ENCODE measurements at regions of chr1 and their contacts with region 1.

Region 1: DNA sequence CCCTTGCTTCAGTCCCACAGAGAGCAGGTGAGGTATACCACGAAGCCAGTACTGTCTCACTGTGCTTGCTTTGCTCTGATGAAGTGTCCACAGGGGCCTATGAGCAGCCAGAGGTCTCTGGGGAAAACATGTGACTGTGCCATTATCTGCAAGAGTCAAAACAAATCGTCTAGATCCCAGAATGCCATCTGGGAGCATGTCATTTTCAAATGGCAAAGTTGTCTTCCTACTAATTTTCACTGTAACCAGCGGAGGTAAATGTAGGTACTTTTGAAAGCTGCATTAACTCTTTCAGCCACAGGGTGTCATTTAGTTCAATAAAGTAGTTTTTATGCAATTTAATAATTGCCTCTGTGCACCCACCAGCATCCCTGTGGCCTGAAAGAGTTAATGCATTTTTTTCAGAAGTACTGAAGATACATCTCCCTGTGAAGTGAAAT is 173.6 kb upstream of the SGIP1 start:
- DNase-seq: peak; percentile 44 to 56 (median 49)
- H3K4me3 ChIP-seq: no peak overlapping the region
- H3K27ac ChIP-seq: no peak overlapping the region
- H3K4me1 ChIP-seq: peaks cover 0 to 5% (median 3%) of the 10 kb centered on the region in 4 experiments
- H3K27me3 ChIP-seq: no peaks in the 10 kb centered on the region

Region 2: DNA sequence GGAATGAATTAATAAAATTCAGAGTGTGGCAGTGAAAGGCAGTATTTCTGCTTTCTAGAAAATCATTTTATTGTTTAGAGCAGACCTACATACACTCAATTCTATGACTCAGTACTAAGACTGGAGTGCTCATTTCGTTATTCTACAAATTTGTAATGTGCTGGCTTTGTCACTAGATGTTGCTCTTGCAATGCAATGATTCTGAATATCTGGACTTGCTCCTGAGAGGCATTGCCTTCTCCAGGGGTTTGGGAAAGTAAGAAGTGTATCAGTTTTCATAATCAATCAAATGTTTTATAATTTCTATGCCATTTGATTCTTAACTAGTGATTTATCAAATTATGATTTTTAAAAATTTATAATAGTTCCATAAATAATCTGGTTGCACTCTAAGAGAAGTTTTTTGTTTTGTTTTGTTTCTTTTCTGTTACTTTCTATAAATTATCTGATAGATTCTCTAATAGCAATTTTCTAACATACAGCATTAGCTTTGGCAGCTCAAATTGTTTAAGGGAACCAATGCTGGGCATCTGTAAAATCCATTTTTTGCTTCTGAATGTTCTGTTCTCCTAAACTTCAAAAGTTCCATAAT is 106.9 kb before region 1 on chr1:
- CTCF ChIA-PET with region 1: interaction called, 36 read pairs
- POLR2A ChIA-PET with region 1: no interaction called
- DNase-seq: peak; percentile 65 to 73 (median 69)
- H3K4me3 ChIP-seq: no peak overlapping the region
- H3K27ac ChIP-seq: no peak overlapping the region
- H3K4me1 ChIP-seq: peaks cover 0 to 26% (median 14%) of the 10 kb centered on the region in 4 experiments
- H3K27me3 ChIP-seq: no peaks in the 10 kb centered on the region

Region 3: DNA sequence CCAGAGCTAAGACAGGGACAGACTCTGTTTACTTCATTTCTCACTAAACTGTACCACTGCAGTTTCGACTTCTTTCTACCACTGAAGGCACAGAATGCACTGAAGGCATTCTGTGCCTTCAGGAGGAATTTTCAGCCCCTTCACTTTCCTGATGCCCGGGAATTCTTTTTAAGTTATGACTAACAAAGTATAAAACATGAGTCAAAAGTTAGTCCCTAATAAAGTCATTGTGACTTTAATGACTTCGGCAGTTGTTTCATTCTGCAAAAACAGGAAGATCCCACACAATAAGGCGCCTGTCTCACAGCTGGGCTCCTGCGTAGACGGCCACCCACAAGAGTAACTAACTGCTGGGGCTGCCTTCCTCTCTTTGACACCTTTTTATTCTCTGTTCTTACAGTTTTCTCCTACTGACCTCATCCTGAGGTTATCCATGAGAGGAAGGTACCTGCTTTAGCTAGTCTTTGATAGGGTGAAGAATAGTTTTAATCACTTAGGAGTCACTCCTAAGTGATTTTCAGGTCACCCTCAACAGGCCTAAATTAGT is 10.2 kb before region 1 on chr1:
- CTCF ChIA-PET with region 1: interaction called, 17 read pairs
- POLR2A ChIA-PET with region 1: interaction called, 4 read pairs
- DNase-seq: peak; percentile 60 to 93 (median 87)
- H3K4me3 ChIP-seq: peak overlapping the region in 3 of 7 experiments; percentile 2 to 51 (median 15)
- H3K27ac ChIP-seq: peak overlapping the region; percentile 37 to 80
- H3K4me1 ChIP-seq: peaks cover 43 to 54% (median 48%) of the 10 kb centered on the region in 4 experiments
- H3K27me3 ChIP-seq: no peaks in the 10 kb centered on the region

Region 4: GRCh38 chr1:66374561-66375111 is 14.3 kb after region 1 on chr1:
- CTCF ChIA-PET with region 1: interaction called, 15 read pairs
- POLR2A ChIA-PET with region 1: interaction called, 3 read pairs
- DNase-seq: peak in 2 of 3 donors; percentile 64 to 70
- H3K4me3 ChIP-seq: peak overlapping the region in 1 of 7 experiments; percentile 30
- H3K27ac ChIP-seq: peak overlapping the region in 1 of 2 experiments; percentile 47
- H3K4me1 ChIP-seq: peaks cover 37 to 55% (median 48%) of the 10 kb centered on the region in 4 experiments
- H3K27me3 ChIP-seq: no peaks in the 10 kb centered on the region

Region 5: DNA sequence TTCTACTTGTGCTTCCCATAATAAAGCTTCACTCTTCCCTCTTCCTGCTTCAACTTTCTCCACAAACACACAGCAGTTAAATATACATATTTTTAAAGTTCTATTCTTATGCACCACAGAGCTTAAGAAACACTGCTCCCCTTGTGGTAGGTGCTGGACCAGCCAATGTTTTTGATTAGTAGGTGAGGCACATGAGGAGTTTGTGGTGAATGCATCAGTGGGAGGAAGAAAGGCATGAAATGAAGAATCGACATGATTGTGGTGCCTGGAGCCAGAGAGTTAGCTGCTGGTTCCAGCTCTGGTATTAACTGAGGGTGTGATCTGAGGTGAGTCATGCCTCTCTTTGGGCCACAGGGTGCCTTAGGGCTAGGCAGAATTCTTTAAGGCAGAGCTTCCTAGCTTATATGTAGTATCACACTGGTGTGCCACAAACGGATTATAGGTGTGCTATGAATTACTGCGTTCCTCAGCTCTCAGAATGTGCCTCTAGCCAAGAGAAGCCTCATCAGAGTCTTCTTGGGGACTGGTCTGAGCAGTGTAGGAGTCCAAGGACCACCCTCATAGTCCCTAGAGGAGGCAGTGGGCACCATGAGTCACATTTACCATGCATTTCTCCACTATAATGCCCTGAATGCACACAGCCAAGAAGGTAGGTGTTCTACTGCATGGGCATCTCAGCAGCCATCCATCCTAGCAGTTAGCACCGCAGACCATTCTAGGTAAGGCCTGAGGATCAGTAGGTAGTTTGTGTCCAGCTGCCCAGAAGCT is 76.3 kb after region 1 on chr1:
- CTCF ChIA-PET with region 1: interaction called, 11 read pairs
- POLR2A ChIA-PET with region 1: no interaction called
- DNase-seq: peak; percentile 31 to 73 (median 58)
- H3K4me3 ChIP-seq: no peak overlapping the region
- H3K27ac ChIP-seq: no peak overlapping the region
- H3K4me1 ChIP-seq: peaks cover 14 to 45% (median 32%) of the 10 kb centered on the region in 4 experiments
- H3K27me3 ChIP-seq: no peaks in the 10 kb centered on the region

Measured in common myeloid progenitor, CD34-positive (primary cell).